ENCODE measurements at regions of chr22 and their contacts with region 1.

Region 1: DNA sequence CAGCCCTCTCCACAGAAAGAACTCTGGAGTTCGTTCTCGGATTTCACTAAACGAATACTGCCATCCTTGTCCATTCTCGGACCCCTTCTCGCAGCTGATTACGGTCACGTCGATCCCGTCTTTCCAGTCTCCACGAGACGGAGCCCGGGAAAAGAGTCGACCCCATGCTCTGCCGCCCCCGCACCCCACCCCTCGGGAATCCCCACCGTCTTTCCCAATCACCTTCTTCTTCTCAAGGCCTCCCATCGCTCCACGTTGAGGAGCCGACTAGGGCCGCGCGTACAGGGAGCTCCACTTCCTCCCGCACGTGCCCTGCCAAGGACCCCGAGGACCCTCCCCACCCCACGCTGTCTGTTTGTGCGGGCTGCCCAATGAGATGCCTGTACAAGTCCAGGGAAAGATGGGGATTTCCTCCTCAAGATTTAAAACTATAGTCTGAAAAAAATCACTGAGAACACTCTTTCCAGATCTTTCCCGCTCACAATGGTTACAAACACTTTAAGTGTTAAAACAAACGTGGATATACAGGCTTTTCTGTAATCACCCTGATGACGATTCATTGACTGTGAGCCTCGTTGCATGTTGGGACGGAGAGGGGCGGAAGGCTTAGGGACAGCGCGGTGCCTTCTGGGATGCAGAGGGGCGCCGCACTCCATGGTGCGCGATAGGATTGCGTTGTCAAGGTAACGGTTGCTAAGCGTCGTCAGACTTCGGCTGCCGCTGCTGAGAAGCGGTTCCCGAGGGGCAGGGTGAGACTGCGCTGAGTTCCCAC is at the start of gene PES1:
- DNase-seq: peak; percentile 97
- ATAC-seq: peak; percentile 98
- H3K4me3 ChIP-seq: peak within 1 kb of the TSS; percentile 72 to 85 (median 84)
- H3K27ac ChIP-seq: peak within 1 kb of the TSS; percentile 86
- H3K4me1 ChIP-seq: peaks cover 26% of the 10 kb centered on the region
- H3K27me3 ChIP-seq: peaks cover 1 to 6% of the 10 kb centered on the region in 2 experiments; a peak in 2 of 5 replicates
- CTCF ChIP-seq: no peak
- EP300 ChIP-seq: 0 out of 4 replicates have a peak, but pooled peaks of 1 of the 2 experiments have one; percentile 11
- POLR2A ChIP-seq: peak; percentile 66 to 68
- RAD21 ChIP-seq: no peak
- total RNA-seq, gene PES1: 94.7 and 111 TPM in 2 replicates

Region 2: DNA sequence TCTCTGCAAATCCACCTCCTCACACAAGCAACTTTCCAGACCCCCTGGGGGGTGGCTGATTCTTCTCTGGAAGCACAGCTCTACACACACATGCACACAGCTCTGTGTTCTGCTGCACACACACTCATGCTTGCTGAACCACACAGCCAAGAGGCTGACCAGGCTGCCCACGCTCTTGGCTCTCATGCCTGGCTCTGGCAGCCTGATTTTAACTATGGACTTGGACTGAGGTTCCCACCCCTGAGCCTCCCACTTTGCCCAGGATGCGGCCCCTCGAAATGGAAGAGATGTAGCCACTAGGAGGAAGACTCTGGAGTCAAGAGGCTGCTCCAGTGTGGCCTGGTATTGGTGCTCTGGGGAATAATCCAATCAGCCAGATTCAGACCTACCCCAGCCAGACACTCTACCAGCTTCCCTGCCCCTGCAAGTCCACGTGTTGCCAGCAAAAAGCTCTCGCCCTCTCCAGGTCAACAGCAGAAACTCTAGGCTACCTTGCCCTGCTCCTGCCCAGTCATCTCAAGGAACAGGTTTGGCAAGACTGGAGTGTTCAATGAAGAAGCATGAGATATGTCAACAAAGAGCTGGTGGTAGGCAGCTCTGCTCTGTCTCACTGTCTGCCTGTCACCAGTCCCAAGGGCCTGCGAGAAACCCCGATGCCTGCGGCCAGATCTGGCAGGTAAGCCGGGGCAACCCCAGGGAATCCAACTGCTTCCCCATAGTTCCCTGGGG is 293.6 kb before region 1 on chr22:
- CTCF ChIA-PET with region 1: no interaction called
- POLR2A ChIA-PET with region 1: no interaction called
- in situ Hi-C with region 1: no loop called
- intact Hi-C with region 1: no loop called
- DNase-seq: no peak
- ATAC-seq: no peak
- H3K4me3 ChIP-seq: no peak overlapping the region
- H3K27ac ChIP-seq: no peak overlapping the region
- H3K4me1 ChIP-seq: no peaks in the 10 kb centered on the region
- H3K27me3 ChIP-seq: no peaks in the 10 kb centered on the region
- CTCF ChIP-seq: no peak
- EP300 ChIP-seq: no peak
- POLR2A ChIP-seq: no peak
- RAD21 ChIP-seq: no peak

Region 3: GRCh38 chr22:30574997-30575671 is 16.6 kb before region 1 on chr22:
- CTCF ChIA-PET with region 1: no interaction called
- POLR2A ChIA-PET with region 1: interaction called, 5 read pairs
- in situ Hi-C with region 1: no loop called
- intact Hi-C with region 1: loop called (anchors 2 kb)
- DNase-seq: no peak
- ATAC-seq: peak; percentile 24
- H3K4me3 ChIP-seq: peak overlapping the region; percentile 16 to 55 (median 42); a peak in 5 of 6 replicates
- H3K27ac ChIP-seq: no peak overlapping the region
- H3K4me1 ChIP-seq: peaks cover 41% of the 10 kb centered on the region
- H3K27me3 ChIP-seq: no peaks in the 10 kb centered on the region
- CTCF ChIP-seq: no peak
- EP300 ChIP-seq: no peak
- POLR2A ChIP-seq: 0 out of 4 replicates have a peak, but pooled peaks of 1 of the 2 experiments have one; percentile 25
- RAD21 ChIP-seq: 0 out of 2 replicates have a peak, but pooled peaks have one; percentile 17

Region 4: DNA sequence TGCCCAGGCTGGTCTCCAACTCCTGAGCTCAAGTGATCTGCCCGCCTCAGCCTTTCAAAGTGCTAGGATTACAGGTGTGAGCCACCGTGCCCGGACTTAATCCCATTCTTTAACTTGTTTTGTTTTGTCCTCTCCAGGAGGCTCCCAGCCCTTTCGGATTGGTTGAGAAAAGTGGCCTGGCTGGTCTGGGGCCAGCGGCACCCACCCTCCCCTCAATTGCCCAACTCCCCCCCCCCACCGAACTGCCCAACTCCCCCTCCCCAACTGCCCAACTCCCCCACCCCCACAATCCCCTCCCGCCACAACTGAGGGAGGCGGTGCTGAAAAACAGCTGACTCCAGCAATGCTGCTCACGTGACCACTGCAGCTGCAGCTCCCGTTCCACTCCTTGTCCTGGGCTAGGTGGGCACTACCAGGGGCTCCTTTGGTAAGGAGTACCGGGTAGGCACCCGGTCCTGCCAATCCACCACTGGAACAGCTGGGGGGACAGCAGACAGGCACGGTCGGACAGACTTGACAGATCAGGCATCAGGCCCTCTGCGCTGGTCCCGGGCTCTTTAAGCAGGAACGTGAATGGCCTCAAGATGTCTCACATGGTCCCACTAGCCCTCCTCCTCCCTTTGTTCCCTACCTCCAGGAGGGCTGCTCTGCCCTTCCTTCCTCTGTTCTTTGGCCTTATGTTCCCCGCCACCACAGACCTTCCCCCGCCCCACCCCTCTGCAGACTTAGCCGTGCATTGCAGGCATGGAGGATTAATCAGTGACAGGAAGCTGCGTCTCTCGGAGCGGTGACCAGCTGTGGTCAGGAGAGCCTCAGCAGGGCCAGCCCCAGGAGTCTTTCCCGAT is 14.9 kb after region 1 on chr22 and contains the start of gene TCN2:
- CTCF ChIA-PET with region 1: no interaction called
- POLR2A ChIA-PET with region 1: interaction called, 10 read pairs
- in situ Hi-C with region 1: no loop called
- intact Hi-C with region 1: no loop called
- DNase-seq: peak; percentile 41
- ATAC-seq: peak; percentile 97
- H3K4me3 ChIP-seq: peak within 1 kb of the TSS; percentile 48 to 79 (median 53)
- H3K27ac ChIP-seq: no peak within 1 kb of the TSS
- H3K4me1 ChIP-seq: peaks cover 38% of the 10 kb centered on the region
- H3K27me3 ChIP-seq: peaks cover 0 to 13% of the 10 kb centered on the region in 2 experiments; a peak in 3 of 5 replicates
- CTCF ChIP-seq: peak; percentile 22; the same call in 1 of the 2 replicates
- EP300 ChIP-seq: no peak
- POLR2A ChIP-seq: no peak
- RAD21 ChIP-seq: no peak
- total RNA-seq, gene TCN2: 0.31 TPM in 1 of 2 replicates, not detected in the other

Measured in HepG2 (cell line).